Esophagus squamous epithelium (tissue), 5 donors: ENCODE measurements at regions of chr19 and their contacts with region 1.

Region 1: GRCh38 chr19:50925734-50926133 is 14.5 kb upstream of the KLK4 start:
- DNase-seq: no peak
- H3K4me3 ChIP-seq: no peak overlapping the region
- H3K27ac ChIP-seq: no peak overlapping the region
- H3K4me1 ChIP-seq: peaks cover 0 to 19% (median 9%) of the 10 kb centered on the region in 3 donors
- H3K27me3 ChIP-seq: peaks cover 0 to 41% (median 0%) of the 10 kb centered on the region in 4 donors
- CTCF ChIP-seq: no peak
- POLR2A ChIP-seq: no peak

Region 2: DNA sequence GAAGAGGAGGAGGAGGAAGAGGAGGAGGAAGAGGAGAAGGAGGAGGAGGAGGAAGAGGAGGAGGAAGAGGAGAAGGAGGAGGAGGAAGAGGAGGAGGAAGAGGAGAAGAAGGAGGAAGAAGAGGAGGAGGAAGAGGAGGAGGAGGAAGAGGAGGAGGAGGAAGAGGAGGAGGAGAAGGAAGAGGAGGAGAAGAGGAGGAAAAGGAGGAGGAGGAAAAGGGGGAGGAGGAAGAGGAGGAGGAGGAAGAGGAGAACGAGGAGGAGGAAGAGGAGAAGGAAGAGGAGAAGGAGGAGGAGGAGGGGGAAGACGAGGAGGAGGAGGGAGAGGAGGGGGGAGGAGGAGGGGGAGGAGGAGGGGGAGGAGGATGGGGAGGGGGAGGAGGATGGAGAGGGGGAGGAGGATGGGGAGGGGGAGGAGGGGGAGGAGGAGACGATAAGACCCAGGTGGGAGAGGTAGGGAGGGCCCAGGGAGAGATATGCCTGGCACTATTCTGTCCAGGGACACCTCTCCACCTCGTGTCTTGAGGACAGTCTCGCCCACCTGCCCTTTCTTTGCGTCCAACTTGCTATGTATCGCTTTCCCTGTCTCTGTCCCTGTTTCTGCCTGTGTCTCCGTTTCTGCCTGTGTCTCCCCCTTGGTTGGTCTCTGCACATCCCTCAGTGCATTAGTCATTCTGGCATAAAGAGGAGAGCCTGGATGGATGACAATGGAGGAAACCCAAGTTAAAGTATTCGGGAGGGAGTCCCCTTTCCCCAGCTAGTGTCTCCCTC is 34.2 kb after region 1 on chr19:
- intact Hi-C with region 1: no loop called
- DNase-seq: no peak
- H3K4me3 ChIP-seq: no peak overlapping the region
- H3K27ac ChIP-seq: no peak overlapping the region
- H3K4me1 ChIP-seq: no peaks in the 10 kb centered on the region
- H3K27me3 ChIP-seq: peaks cover 0 to 30% (median 0%) of the 10 kb centered on the region in 4 donors
- CTCF ChIP-seq: no peak
- POLR2A ChIP-seq: no peak

Region 3: DNA sequence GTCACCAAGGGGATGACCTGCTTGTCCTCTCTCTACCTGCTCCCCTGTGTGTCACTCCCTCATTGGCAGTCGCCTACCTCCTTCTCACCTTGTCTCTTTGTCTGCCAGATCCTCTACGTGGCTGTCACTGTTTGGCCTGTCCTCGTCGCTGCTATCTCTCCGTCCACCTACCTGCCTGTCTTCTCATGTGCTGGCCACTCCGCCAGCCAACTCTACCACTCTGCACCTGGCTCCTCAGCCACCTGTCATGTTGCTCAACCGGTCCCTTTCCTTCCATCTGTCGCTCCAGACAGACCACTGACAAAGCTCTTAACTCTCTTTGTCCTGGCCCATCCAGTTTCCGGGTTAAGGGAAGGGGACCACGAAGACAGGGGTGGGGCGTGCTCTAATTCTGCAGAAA is 109.0 kb after region 1 on chr19 and contains the start of gene KLK12:
- intact Hi-C with region 1: no loop called
- DNase-seq: no peak
- H3K4me3 ChIP-seq: peak within 1 kb of the TSS in 3 of 4 donors; percentile 3 to 33 (median 28)
- H3K27ac ChIP-seq: peak within 1 kb of the TSS in 3 of 4 donors; percentile 43 to 79 (median 72)
- H3K4me1 ChIP-seq: peaks cover 0 to 26% (median 0%) of the 10 kb centered on the region in 3 donors
- H3K27me3 ChIP-seq: peaks cover 0 to 16% (median 0%) of the 10 kb centered on the region in 4 donors
- CTCF ChIP-seq: no peak
- POLR2A ChIP-seq: no peak
- total RNA-seq, gene KLK12: 16.2 to 231 (median 115) TPM

Region 4: DNA sequence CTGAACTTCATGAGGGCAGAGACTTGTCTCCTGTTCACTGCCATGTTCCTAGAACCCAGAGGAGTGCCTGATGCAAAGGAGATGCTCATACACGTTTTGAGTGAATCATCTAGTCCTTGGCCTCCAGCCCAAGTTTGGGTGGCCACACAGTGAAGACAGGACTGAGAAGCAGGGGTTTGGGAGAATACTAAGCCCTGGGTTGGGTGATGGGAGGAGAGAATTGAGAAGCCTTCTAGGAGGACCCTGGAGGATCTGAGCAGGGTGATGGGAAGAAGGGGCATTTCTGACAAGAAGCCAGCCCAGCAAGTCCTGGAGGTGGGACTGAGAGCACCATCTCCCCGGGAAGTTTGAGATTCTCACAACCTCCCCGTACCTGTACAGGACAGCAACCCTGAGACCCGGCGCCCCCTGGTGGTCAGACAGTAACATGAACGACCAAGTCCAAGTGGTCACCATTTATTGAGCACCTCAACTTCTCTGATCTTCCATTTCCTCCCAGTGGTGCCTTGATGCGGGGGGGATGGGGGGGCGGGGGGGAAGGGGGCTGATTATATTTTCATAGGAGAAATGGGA is 171.5 kb after region 1 on chr19:
- intact Hi-C with region 1: loop called (anchors 5 kb)
- DNase-seq: no peak
- H3K4me3 ChIP-seq: no peak overlapping the region
- H3K27ac ChIP-seq: peak overlapping the region; percentile 49 to 66 (median 56)
- H3K4me1 ChIP-seq: peaks cover 7 to 45% (median 9%) of the 10 kb centered on the region in 3 donors
- H3K27me3 ChIP-seq: no peaks in the 10 kb centered on the region
- CTCF ChIP-seq: peak; percentile 27 to 74 (median 65)
- POLR2A ChIP-seq: no peak